ENCODE measurements at regions of chr17 and their contacts with region 1.

Region 1: DNA sequence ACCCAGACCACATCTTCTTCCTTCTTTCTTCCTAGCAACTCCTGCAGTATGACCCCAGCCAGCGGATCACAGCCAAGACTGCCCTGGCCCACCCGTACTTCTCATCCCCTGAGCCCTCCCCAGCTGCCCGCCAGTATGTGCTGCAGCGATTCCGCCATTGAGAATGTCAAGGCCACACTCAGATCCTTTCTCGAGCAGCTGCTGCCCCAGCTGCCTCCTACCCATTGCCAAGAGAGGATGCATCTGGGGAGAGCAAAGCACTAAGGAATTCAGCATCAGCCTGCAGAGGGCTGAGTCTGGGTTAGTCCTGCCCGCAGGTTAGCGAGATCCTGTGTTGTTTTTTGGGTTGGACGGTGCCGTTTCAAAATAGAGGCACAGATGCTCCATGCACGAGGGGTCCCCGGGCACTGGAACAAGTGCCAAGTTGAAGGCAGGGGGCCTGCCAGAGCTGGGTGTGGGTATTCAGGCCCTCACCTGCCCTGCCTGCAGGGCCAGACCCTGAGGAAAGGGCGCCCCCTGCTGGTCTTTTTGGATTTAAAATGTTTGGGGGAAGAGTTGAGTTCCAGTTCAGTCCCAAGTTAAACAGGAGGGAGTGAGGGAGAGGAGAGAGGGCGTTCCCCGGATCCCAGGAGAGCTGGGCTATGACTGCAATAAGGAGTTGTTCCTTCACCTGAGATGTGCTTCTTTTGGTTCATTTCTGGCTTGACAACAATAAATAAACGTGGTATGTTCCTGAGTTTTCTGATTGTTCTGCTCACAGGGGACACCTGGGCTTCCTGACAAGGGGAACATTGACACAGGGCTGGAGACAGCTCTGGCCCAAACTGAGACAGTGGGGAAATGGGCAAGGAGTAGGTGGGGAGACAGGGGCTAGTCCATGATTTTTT is 4.9 kb downstream of the CDK3 start:
- DNase-seq: no peak
- ATAC-seq: peak; percentile 70

Region 2: DNA sequence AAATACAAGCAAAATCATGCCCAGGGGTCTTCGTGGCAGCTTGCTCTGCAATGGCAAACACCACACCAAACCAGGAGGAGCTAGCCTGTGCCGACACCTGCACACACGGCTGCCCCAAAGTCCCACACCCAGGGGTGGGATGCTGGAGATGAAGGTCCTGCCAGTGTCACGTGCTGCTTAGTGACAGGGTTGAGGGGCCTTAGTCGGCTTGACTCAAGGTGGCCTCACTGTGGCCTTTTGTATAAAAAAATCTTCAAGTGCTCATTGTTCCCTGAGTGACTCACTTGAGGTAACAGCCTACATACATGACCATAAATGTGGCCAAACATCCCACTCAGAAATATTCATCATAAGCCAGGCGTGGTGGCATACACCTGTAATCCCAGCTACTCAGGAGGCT is 116.1 kb before region 1 on chr17:
- intact Hi-C with region 1: no loop called
- DNase-seq: no peak
- ATAC-seq: no peak

Region 3: GRCh38 chr17:75904749-75905521 is 100.6 kb before region 1 on chr17 and contains the start of gene MRPL38:
- intact Hi-C with region 1: loop called (anchors 1 kb)
- DNase-seq: peak; percentile 97
- ATAC-seq: peak; percentile 95
- total RNA-seq, gene MRPL38: 115 TPM

Measured in Right ventricle myocardium inferior (tissue), 1 donor.